ENCODE measurements at regions of chr3 and their contacts with region 1.

Region 1: DNA sequence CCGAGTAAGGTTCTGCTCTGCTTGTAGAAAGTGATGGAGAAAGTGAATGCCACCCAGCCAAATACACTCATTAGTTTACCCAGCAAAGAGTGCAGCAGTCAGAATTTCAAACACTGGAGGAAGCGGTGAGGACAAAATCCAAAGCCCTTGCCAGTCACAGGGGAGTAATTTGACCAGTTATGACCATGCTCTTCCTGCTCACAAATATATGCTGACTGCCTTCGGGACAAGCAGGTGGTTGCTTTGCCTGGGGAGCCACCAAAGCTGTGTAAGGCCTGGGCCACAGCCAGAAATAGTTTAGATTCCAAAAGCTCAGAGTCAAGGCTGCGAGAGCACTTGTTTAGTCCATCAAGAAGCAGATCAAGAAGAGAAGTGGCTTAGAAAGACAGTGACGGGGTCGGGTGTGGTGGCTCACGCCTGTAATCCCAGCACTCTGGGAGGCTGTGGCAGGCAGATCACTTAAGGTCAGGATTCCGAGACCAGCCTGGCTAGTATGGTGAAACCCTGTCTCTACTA is 51.0 kb upstream of the ATP13A3 start:
- DNase-seq: peak; percentile 87
- ATAC-seq: peak; percentile 82
- H3K4me3 ChIP-seq: no peak overlapping the region
- H3K27ac ChIP-seq: no peak overlapping the region
- H3K4me1 ChIP-seq: peaks cover 11% of the 10 kb centered on the region
- H3K27me3 ChIP-seq: no peaks in the 10 kb centered on the region
- CTCF ChIP-seq: no peak
- POLR2A ChIP-seq: no peak
- RAD21 ChIP-seq: no peak

Region 2: DNA sequence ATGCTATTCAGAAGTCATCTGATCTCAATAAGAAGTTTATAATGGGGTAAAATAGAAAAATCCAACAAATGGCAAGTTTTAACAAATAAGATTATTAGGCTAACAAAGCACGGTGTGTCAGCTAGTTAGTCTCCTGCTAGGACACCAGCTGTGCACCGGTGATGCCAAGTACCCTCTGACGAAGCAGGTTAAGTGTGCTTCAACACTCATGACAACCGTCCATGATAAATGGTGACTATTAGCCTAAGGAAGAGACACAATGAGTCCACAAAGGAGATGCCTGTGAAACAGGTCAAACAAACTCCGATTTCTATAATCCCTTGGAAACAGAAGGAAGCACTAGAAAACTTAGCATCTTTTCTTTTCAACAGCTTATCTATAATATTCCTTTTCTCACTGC is 87.4 kb before region 1 on chr3:
- CTCF ChIA-PET with region 1: no interaction called
- POLR2A ChIA-PET with region 1: no interaction called
- dilution Hi-C with region 1: no loop called
- in situ Hi-C with region 1: no loop called
- intact Hi-C with region 1: no loop called
- DNase-seq: no peak
- ATAC-seq: no peak
- H3K4me3 ChIP-seq: no peak overlapping the region
- H3K27ac ChIP-seq: no peak overlapping the region
- H3K4me1 ChIP-seq: no peaks in the 10 kb centered on the region
- H3K27me3 ChIP-seq: no peaks in the 10 kb centered on the region
- CTCF ChIP-seq: no peak
- POLR2A ChIP-seq: no peak
- RAD21 ChIP-seq: no peak

Region 3: DNA sequence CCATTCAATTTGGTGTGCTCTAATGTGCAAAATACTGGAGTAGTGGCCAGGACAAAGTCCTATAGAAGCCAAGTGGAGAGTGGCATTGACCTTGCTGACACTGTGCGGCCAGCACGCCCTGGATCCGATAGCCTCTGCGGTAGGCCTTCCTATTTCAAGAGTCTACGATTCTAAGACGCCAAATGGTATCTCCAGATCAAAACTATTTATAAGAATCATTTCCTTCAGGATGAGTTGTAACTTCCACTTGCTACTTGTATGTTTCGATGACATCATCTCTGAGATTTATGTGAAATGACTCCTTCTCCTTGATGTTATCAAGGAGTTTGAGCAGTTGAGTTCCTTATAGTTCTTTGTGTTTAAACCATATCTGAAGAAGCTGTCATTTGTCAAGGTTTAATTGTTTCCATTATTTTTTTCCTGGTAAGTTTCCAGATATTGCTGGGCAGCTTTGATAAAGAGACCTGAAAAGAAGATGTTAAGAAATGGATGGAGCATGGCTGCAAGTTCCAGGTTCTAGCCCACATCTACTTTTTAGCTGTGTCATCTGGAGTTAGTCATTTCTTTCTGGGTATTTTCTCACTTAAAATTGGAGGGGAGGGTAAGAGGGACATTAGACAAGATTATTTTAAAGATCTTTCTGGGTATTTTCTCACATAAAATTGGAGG is 23.6 kb after region 1 on chr3:
- CTCF ChIA-PET with region 1: no interaction called
- POLR2A ChIA-PET with region 1: no interaction called
- dilution Hi-C with region 1: no loop called
- in situ Hi-C with region 1: no loop called
- intact Hi-C with region 1: loop called (anchors 1 kb)
- DNase-seq: peak; percentile 94
- ATAC-seq: peak; percentile 46
- H3K4me3 ChIP-seq: no peak overlapping the region
- H3K27ac ChIP-seq: peak overlapping the region; percentile 62
- H3K4me1 ChIP-seq: peaks cover 14% of the 10 kb centered on the region
- H3K27me3 ChIP-seq: no peaks in the 10 kb centered on the region
- CTCF ChIP-seq: no peak
- POLR2A ChIP-seq: no peak
- RAD21 ChIP-seq: no peak

Region 4: GRCh38 chr3:194584319-194584776 is 46.6 kb after region 1 on chr3:
- CTCF ChIA-PET with region 1: no interaction called
- POLR2A ChIA-PET with region 1: no interaction called
- dilution Hi-C with region 1: no loop called
- in situ Hi-C with region 1: no loop called
- intact Hi-C with region 1: no loop called
- DNase-seq: no peak
- ATAC-seq: no peak
- H3K4me3 ChIP-seq: peak overlapping the region; percentile 91
- H3K27ac ChIP-seq: peak overlapping the region; percentile 99
- H3K4me1 ChIP-seq: no peaks in the 10 kb centered on the region; the same call in 1 of the 2 replicates
- H3K27me3 ChIP-seq: no peaks in the 10 kb centered on the region
- CTCF ChIP-seq: no peak
- POLR2A ChIP-seq: no peak
- RAD21 ChIP-seq: no peak

Measured in IMR-90 (cell line).